Heart right ventricle (tissue), 16 donors: ENCODE measurements at regions of chr4 and their contacts with region 1.

Region 1: GRCh38 chr4:129641179-129641578 is 545.2 kb downstream of the C4orf33 start:
- DNase-seq: peak in 1 of 2 donors; percentile 37
- ATAC-seq: peak in 1 of 8 donors; percentile 47
- H3K4me3 ChIP-seq: no peak overlapping the region
- H3K27ac ChIP-seq: no peak overlapping the region
- H3K4me1 ChIP-seq: no peaks in the 10 kb centered on the region
- H3K27me3 ChIP-seq: no peaks in the 10 kb centered on the region
- CTCF ChIP-seq: peak; percentile 76 to 91 (median 82)

Region 2: DNA sequence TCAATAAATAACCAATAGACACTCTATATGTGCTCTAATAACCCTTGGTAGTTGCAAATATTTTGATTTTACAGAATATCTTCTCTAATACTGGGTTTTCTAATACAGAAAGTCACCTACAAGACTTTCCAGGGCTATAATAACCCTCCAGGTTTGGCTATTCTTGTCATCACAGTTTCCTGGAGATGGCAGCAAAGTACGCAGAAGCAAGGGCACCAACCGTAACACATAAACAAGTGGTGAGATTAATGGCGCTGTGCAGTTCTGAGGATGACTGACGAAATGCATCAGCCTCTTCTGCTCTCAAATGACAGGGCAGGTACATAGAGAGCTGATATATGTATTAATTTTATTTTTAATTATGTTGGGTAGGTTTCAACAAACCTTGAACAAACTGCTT is 422.8 kb before region 1 on chr4:
- intact Hi-C with region 1: loop called in 1 of 10 experiments (anchors 10 kb)
- DNase-seq: peak in 1 of 2 donors; percentile 8
- ATAC-seq: peak in 7 of 8 donors; percentile 28 to 75 (median 62)
- H3K4me3 ChIP-seq: no peak overlapping the region
- H3K27ac ChIP-seq: no peak overlapping the region
- H3K4me1 ChIP-seq: peaks cover 0 to 3% (median 0%) of the 10 kb centered on the region in 9 donors
- H3K27me3 ChIP-seq: peaks cover 0 to 5% (median 0%) of the 10 kb centered on the region in 7 donors
- CTCF ChIP-seq: peak in 8 of 9 donors; percentile 18 to 54 (median 43)

Region 3: GRCh38 chr4:129344058-129344457 is 297.1 kb before region 1 on chr4:
- intact Hi-C with region 1: loop called in 2 of 10 experiments (anchors 5 kb)
- DNase-seq: peak in 1 of 2 donors; percentile 5
- ATAC-seq: peak in 1 of 8 donors; percentile 17
- H3K4me3 ChIP-seq: no peak overlapping the region
- H3K27ac ChIP-seq: no peak overlapping the region
- H3K4me1 ChIP-seq: peaks cover 0 to 21% (median 0%) of the 10 kb centered on the region in 9 donors
- H3K27me3 ChIP-seq: peaks cover 0 to 14% (median 0%) of the 10 kb centered on the region in 7 donors
- CTCF ChIP-seq: peak; percentile 8 to 69 (median 62)

Region 4: GRCh38 chr4:129362674-129363274 is 278.4 kb before region 1 on chr4:
- intact Hi-C with region 1: loop called (anchors 1 to 5 kb)
- DNase-seq: peak; percentile 7 to 51
- ATAC-seq: peak in 3 of 8 donors; percentile 42 to 71 (median 68)
- H3K4me3 ChIP-seq: no peak overlapping the region
- H3K27ac ChIP-seq: no peak overlapping the region
- H3K4me1 ChIP-seq: no peaks in the 10 kb centered on the region
- H3K27me3 ChIP-seq: peaks cover 0 to 9% (median 3%) of the 10 kb centered on the region in 7 donors
- CTCF ChIP-seq: peak; percentile 51 to 90 (median 85)

Region 5: DNA sequence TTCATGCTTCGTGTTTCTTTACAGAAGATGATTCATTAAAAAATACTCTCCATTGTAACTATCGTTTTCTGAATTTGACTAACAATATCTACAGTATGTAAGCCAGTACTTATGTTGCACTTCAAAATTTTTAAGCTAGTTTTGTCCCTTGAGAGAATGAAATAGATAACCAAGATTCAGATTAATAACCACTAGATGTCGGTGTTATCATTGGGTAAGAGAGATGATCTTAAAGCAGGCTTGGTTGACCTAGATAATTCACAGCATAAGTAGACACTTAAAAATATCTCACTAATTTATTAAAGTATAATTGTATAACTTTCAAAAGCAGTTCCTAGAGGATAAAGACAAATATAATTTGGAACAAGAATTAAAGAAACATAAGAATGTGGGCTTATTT is 114.4 kb before region 1 on chr4:
- intact Hi-C with region 1: loop called (anchors 1 to 10 kb)
- DNase-seq: no peak
- ATAC-seq: no peak
- H3K4me3 ChIP-seq: no peak overlapping the region
- H3K27ac ChIP-seq: no peak overlapping the region
- H3K4me1 ChIP-seq: peaks cover 0 to 9% (median 0%) of the 10 kb centered on the region in 9 donors
- H3K27me3 ChIP-seq: peaks cover 0 to under 1% (median 0%) of the 10 kb centered on the region in 7 donors
- CTCF ChIP-seq: peak in 8 of 9 donors; percentile 26 to 74 (median 56)